ENCODE measurements at regions of chr12 and their contacts with region 1.

Region 1: GRCh38 chr12:47844274-47845019 is 24.7 kb upstream of the HDAC7 start:
- DNase-seq: peak in 1 of 2 donors; percentile 57
- H3K4me3 ChIP-seq: no peak overlapping the region
- H3K27ac ChIP-seq: no peak overlapping the region
- H3K4me1 ChIP-seq: peaks cover 0 to 9% (median 3%) of the 10 kb centered on the region in 4 donors
- H3K27me3 ChIP-seq: no peaks in the 10 kb centered on the region
- CTCF ChIP-seq: no peak
- EP300 ChIP-seq: no peak
- POLR2A ChIP-seq: no peak

Region 2: DNA sequence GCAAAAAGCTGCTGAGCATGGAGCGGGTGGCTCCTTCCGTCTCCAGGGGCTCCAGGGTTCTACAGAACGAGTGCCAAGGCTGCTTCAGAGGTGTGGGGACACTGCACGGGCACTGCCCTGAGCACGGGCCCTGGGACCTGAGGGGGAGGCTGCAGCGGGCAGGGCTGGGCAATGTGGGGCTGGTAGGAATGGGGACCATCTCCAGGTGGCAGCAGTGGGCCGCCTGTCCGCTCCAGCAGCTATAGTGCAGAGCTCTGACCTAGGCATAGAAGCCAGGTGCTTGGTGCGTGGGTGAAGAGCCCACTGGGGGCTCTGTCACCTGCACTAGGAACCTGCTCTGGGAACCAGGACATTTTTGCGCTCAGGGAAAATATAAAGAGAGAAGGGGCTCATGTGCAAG is 47.0 kb before region 1 on chr12:
- intact Hi-C with region 1: loop called (anchors 5 kb)
- DNase-seq: peak; percentile 49 to 79
- H3K4me3 ChIP-seq: no peak overlapping the region
- H3K27ac ChIP-seq: no peak overlapping the region
- H3K4me1 ChIP-seq: peaks cover 32 to 52% (median 36%) of the 10 kb centered on the region in 4 donors
- H3K27me3 ChIP-seq: no peaks in the 10 kb centered on the region
- CTCF ChIP-seq: peak in 4 of 7 experiments; percentile 15 to 54 (median 20)
- EP300 ChIP-seq: no peak
- POLR2A ChIP-seq: no peak

Region 3: DNA sequence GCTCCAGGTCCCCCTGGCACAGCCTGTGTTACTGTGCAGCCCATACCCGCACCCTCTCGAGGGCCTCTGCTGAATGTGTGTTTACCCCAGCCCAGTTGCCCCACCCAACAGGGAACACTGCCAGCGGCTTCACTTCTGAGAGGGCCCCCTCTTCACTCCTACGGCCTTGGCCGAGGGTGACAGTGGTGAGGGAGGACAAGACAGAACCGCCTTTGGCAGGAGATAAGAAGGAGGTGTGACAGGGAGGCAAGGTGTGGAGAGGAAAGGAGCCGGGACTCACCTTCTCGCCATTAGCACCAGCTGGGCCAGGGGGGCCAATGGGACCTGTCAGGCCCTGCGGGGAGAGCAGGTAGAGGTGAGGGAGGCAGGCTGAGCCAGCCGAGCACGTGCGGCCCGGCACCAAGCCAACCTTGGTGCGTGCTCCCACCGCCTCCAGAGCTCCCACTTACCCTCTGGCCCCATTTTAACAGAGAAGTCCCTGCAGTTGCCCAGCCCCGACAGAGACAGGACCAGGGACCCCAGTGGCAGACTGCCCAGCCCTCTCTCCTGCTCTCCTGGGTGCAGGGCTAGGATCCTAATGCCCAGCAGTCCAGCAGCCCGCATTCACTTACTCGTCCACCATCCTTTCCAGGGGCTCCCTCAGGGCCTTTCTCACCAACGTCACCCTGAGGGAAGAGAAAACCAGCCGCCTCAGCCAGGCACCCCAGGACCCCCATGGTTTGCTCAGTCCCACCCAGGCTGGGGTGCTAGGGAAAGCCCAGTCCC is 137.2 kb after region 1 on chr12:
- intact Hi-C with region 1: no loop called
- DNase-seq: peak in 1 of 2 donors; percentile 73
- H3K4me3 ChIP-seq: no peak overlapping the region
- H3K27ac ChIP-seq: no peak overlapping the region
- H3K4me1 ChIP-seq: no peaks in the 10 kb centered on the region
- H3K27me3 ChIP-seq: peaks cover 0 to 22% (median 0%) of the 10 kb centered on the region in 3 donors
- CTCF ChIP-seq: no peak
- EP300 ChIP-seq: no peak
- POLR2A ChIP-seq: no peak

Measured in stomach (tissue), 19 donors.